ENCODE measurements at regions of chr3 and their contacts with region 1.

Region 1: GRCh38 chr3:139329345-139329850 is 14.4 kb upstream of the MRPS22 start:
- DNase-seq: peak; percentile 78 to 93 (median 84)
- ATAC-seq: peak; percentile 86 to 97 (median 96)
- H3K4me3 ChIP-seq: peak overlapping the region in 4 of 12 donors; percentile 18 to 32 (median 29)
- H3K27ac ChIP-seq: no peak overlapping the region
- H3K4me1 ChIP-seq: peaks cover 0 to 8% (median 2%) of the 10 kb centered on the region in 12 donors
- H3K27me3 ChIP-seq: peaks cover 0 to 31% (median 9%) of the 10 kb centered on the region in 9 donors
- CTCF ChIP-seq: peak; percentile 97 to 100 (median 98)
- POLR2A ChIP-seq: no peak

Region 2: GRCh38 chr3:138935848-138936740 is 393.3 kb before region 1 on chr3:
- intact Hi-C with region 1: loop called (anchors 1 to 5 kb)
- DNase-seq: peak; percentile 65 to 89 (median 74)
- ATAC-seq: peak; percentile 25 to 87 (median 76)
- H3K4me3 ChIP-seq: peak overlapping the region in 11 of 12 donors; percentile 3 to 50 (median 39)
- H3K27ac ChIP-seq: no peak overlapping the region
- H3K4me1 ChIP-seq: peaks cover 0 to 46% (median 38%) of the 10 kb centered on the region in 12 donors
- H3K27me3 ChIP-seq: peaks cover 44 to 68% (median 53%) of the 10 kb centered on the region in 9 donors
- CTCF ChIP-seq: peak; percentile 88 to 97 (median 95)
- POLR2A ChIP-seq: no peak

Region 3: DNA sequence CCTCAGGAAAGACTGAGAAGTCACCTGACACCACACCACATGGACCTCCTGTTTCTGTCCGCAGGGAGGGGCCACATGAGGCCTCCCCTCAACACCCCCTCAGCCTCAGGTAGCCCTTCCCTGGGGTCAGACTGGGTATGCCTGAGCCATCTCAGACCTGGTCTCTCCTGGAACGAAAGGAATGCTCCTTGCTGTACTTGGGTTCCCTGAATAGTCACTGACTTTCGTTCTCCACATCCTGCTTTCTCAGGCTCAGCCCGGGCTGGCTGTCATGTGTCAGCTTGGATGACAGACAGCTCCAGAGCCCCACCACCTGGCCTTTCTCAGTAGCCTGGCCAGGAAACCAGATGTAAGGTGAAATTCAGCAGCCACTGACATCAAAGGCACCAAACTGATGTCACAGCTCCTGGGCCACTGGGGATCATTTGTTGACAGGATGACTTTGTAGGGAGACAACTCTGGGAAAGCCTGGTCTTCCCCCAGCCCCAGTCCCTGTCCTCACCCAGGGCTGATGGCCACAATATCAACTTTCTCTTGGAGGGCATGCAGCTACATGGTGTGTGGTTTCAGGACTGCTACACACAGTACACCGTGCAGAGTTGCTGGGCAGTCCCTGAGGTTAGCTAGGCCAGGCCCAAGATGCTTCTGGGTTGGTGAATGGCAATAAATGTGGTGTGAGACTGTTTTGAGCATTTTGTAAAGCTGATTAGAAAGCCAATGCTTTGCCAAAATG is 127.0 kb before region 1 on chr3:
- intact Hi-C with region 1: loop called in 1 of 10 experiments (anchors 10 kb)
- DNase-seq: peak in 2 of 5 donors; percentile 20 to 41
- ATAC-seq: peak in 3 of 4 donors; percentile 41 to 72 (median 49)
- H3K4me3 ChIP-seq: no peak overlapping the region
- H3K27ac ChIP-seq: no peak overlapping the region
- H3K4me1 ChIP-seq: peaks cover 0 to 4% (median 0%) of the 10 kb centered on the region in 12 donors
- H3K27me3 ChIP-seq: no peaks in the 10 kb centered on the region
- CTCF ChIP-seq: peak in 4 of 12 donors; percentile 15 to 37 (median 22)
- POLR2A ChIP-seq: no peak

Region 4: DNA sequence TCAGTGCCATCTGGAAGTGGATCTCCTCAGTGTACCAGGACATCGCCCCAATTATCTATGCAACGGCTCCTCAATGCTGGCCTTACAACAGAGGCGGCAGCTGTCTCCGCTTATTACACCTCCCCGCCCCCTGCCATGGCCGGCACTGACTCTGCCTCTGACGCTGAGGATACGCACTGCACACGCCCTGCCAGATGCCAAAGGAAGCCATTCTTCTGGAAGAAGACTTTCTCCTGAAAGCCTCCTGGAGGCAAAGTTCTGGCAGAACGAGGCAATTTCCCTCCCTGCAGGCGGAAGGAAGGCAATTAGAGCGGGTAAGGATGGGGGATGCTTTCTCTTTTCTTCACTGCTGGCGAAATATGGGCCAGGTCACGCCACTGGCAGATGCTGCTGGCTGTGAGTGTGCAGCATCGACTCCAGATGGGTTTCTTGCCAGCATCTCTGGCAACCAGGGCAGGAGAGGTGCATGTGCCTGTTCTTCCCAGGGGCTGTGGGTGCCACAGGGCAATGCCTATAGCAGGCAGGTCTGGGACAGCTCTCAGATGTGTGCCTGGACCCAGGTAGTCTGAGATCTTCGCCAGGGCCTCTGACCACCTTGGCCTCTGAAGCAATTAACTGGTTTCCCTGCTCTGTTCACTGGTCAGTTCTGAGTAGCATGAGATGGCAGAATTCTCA is 47.7 kb before region 1 on chr3:
- intact Hi-C with region 1: no loop called
- DNase-seq: no peak
- ATAC-seq: no peak
- H3K4me3 ChIP-seq: no peak overlapping the region
- H3K27ac ChIP-seq: no peak overlapping the region
- H3K4me1 ChIP-seq: peaks cover 0 to 14% (median 1%) of the 10 kb centered on the region in 12 donors
- H3K27me3 ChIP-seq: no peaks in the 10 kb centered on the region
- CTCF ChIP-seq: no peak
- POLR2A ChIP-seq: no peak

Region 5: DNA sequence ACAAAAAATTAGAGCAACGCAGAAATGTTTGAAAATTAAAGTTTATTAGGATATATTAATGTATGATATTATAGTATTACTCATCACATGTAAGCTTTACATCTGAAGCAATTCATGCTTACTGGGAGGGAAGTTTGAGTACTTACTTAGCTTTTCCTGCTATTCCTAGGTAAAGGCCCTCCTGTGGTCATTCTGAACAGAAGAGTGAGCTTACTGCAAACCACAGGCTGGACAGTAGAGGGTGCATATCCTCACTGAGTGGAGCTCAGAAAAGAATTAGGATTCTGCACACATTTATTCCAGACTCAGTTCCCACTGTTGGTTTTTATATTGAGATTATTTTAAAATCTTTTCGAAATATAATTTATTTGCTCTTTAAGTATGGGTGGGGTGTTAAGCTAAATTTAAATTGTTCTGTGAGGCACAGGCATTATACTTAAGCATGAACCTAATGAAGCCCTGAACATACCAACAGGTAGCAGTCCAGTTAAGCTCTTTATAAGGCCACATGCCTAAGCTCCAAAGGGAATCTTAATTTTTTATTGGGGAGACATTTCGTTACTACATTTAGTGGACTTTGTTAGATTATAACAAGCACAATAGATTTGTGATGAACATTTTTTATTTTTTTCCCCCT is 24.6 kb after region 1 on chr3:
- intact Hi-C with region 1: no loop called
- DNase-seq: no peak
- ATAC-seq: peak in 3 of 4 donors; percentile 61 to 64 (median 63)
- H3K4me3 ChIP-seq: no peak overlapping the region
- H3K27ac ChIP-seq: no peak overlapping the region
- H3K4me1 ChIP-seq: peaks cover 0 to 3% (median 0%) of the 10 kb centered on the region in 12 donors
- H3K27me3 ChIP-seq: no peaks in the 10 kb centered on the region
- CTCF ChIP-seq: peak in 11 of 12 donors; percentile 13 to 79 (median 39)
- POLR2A ChIP-seq: no peak